ENCODE measurements at regions of chr9 and their contacts with region 1.

Region 1: GRCh38 chr9:35603987-35604577 is 980 bp upstream of the TESK1 start:
- DNase-seq: peak; percentile 94 to 98 (median 96)
- ATAC-seq: peak; percentile 98
- H3K4me3 ChIP-seq: peak overlapping the region; percentile 54
- H3K27ac ChIP-seq: peak overlapping the region; percentile 87
- H3K4me1 ChIP-seq: peaks cover 2 to 29% of the 10 kb centered on the region in 2 experiments; a peak in 3 of 5 replicates
- H3K27me3 ChIP-seq: no peaks in the 10 kb centered on the region
- CTCF ChIP-seq: peak; percentile 77 to 95 (median 81)
- EP300 ChIP-seq: no peak
- POLR2A ChIP-seq: peak; percentile 71; the same call in 1 of the 2 replicates
- RAD21 ChIP-seq: peak; percentile 15 to 57

Region 2: GRCh38 chr9:35657546-35658136 is 53.6 kb after region 1 on chr9 and contains the start of gene RMRP:
- CTCF ChIA-PET with region 1: no interaction called
- POLR2A ChIA-PET with region 1: interaction called, 3 read pairs
- in situ Hi-C with region 1: no loop called
- intact Hi-C with region 1: loop called (anchors 2 kb)
- DNase-seq: peak; percentile 80 to 98 (median 86)
- ATAC-seq: peak; percentile 96
- H3K4me3 ChIP-seq: peak within 1 kb of the TSS; percentile 89
- H3K27ac ChIP-seq: peak within 1 kb of the TSS; percentile 98
- H3K4me1 ChIP-seq: peaks cover 14 to 26% of the 10 kb centered on the region in 2 experiments; a peak in 4 of 5 replicates
- H3K27me3 ChIP-seq: no peaks in the 10 kb centered on the region
- CTCF ChIP-seq: peak; percentile 19 to 35 (median 25); a peak in 2 of 6 replicates
- EP300 ChIP-seq: peak; percentile 42; the same call in 1 of the 2 replicates
- POLR2A ChIP-seq: no peak; the same call in 1 of the 2 replicates
- RAD21 ChIP-seq: no peak; a peak in 1 of 4 replicates
- polyA plus RNA-seq, gene RMRP: not detected

Region 3: DNA sequence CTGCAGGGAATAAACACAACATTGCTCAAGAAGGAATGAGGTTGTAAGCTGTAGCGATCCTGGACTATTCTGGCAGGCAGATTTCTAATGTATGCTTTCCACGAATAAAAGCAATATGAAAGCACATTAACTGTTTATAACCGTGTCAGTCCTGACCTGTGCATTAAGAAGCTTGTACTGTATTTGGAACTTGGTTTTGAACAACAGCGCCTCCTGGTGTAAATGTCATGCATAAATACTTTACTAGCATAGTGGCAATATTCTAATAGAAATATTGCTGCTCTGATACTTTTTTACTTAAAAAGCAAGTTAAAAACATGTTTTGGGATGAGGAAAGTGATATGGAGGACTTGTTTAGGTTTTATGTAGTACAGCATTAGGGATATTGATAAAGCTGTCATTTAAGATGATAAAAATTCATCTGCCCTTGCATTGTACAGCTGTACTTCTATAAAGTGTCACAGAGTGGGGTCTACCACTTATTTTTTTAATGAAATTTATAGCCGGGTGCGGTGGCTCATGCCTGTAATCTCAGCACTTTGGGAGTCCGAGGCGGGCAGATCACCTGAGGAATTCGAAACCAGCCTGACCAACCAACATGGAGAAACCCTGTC is 724.8 kb after region 1 on chr9:
- CTCF ChIA-PET with region 1: no interaction called
- POLR2A ChIA-PET with region 1: no interaction called
- in situ Hi-C with region 1: no loop called
- intact Hi-C with region 1: no loop called
- DNase-seq: peak; percentile 43 to 73 (median 48)
- ATAC-seq: peak; percentile 90
- H3K4me3 ChIP-seq: no peak overlapping the region
- H3K27ac ChIP-seq: no peak overlapping the region
- H3K4me1 ChIP-seq: no peaks in the 10 kb centered on the region; a peak in 1 of 5 replicates
- H3K27me3 ChIP-seq: no peaks in the 10 kb centered on the region
- CTCF ChIP-seq: peak; percentile 60 to 78 (median 63); a peak in 5 of 6 replicates
- EP300 ChIP-seq: no peak
- POLR2A ChIP-seq: no peak
- RAD21 ChIP-seq: peak; percentile 71 to 94

Region 4: GRCh38 chr9:36704148-36704547 is 1100.1 kb after region 1 on chr9:
- CTCF ChIA-PET with region 1: no interaction called
- POLR2A ChIA-PET with region 1: no interaction called
- in situ Hi-C with region 1: no loop called
- intact Hi-C with region 1: no loop called
- DNase-seq: no peak
- ATAC-seq: no peak
- H3K4me3 ChIP-seq: no peak overlapping the region
- H3K27ac ChIP-seq: no peak overlapping the region
- H3K4me1 ChIP-seq: no peaks in the 10 kb centered on the region
- H3K27me3 ChIP-seq: peaks cover 0 to 6% of the 10 kb centered on the region in 2 experiments; a peak in 4 of 5 replicates
- CTCF ChIP-seq: no peak
- EP300 ChIP-seq: no peak
- POLR2A ChIP-seq: no peak
- RAD21 ChIP-seq: no peak

Measured in K562 (cell line).